ENCODE measurements at regions of chr7 and their contacts with region 1.

Region 1: DNA sequence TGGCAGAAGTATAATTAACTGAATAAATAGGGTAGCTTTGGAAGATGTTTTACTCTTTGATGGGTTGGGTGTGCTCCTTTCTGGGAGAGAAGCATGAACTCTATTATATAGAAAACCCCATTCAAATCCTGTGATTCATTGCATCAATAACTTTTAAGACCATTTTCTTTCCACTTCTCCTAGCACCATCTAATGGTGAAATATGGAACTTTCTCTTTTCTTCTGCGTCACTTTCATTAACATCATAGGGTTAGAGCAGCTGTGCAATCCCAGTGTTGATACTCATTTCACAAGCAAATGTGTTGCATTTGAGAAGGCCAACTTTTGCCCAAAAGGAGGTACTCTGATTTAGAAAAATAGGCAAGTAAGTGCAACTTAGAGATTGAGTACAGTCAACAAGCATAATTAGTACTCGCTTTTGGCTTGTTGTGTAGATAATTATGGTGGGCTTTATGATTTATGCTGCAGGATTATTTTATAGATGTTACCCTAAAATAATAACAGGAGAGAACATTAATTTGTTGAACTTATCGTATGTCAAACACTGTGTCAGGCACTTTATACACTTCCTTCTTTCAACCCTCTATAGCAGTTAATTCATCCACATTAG is 92.9 kb downstream of the CPED1 start:
- DNase-seq: no peak
- H3K4me3 ChIP-seq: no peak overlapping the region
- H3K27ac ChIP-seq: no peak overlapping the region
- H3K4me1 ChIP-seq: no peaks in the 10 kb centered on the region
- H3K27me3 ChIP-seq: no peaks in the 10 kb centered on the region
- CTCF ChIP-seq: peak; percentile 63 to 77 (median 69)
- POLR2A ChIP-seq: no peak

Region 2: DNA sequence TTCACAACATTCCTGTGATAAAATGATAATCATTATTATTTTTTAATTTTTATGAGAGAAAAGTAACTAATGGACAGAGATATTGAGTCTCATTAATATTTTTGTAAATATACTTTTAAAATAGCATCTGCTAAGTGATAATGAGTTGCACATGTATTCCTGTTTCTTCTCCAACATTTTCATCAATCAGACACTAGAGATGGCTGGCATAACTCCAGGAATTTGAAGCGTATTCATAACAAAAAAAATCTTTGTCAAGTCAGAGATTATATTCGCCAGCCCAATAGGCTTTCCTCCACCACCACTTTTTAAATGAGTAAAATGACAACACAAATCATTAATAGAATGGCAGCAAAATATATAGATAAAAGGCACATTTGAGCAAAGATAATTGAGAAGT is 1332.4 kb before region 1 on chr7:
- intact Hi-C with region 1: no loop called
- DNase-seq: no peak
- H3K4me3 ChIP-seq: no peak overlapping the region
- H3K27ac ChIP-seq: no peak overlapping the region
- H3K4me1 ChIP-seq: no peaks in the 10 kb centered on the region
- H3K27me3 ChIP-seq: no peaks in the 10 kb centered on the region
- CTCF ChIP-seq: no peak
- POLR2A ChIP-seq: no peak

Region 3: GRCh38 chr7:120987683-120988590 is 93.5 kb before region 1 on chr7:
- intact Hi-C with region 1: loop called (anchors 10 kb)
- DNase-seq: peak; percentile 78 to 80
- H3K4me3 ChIP-seq: peak overlapping the region; percentile 51 to 65 (median 53)
- H3K27ac ChIP-seq: peak overlapping the region; percentile 77 to 90
- H3K4me1 ChIP-seq: no peaks in the 10 kb centered on the region
- H3K27me3 ChIP-seq: peaks cover 0 to 7% of the 10 kb centered on the region in 2 donors
- CTCF ChIP-seq: peak; percentile 64 to 89 (median 74)
- POLR2A ChIP-seq: no peak

Region 4: DNA sequence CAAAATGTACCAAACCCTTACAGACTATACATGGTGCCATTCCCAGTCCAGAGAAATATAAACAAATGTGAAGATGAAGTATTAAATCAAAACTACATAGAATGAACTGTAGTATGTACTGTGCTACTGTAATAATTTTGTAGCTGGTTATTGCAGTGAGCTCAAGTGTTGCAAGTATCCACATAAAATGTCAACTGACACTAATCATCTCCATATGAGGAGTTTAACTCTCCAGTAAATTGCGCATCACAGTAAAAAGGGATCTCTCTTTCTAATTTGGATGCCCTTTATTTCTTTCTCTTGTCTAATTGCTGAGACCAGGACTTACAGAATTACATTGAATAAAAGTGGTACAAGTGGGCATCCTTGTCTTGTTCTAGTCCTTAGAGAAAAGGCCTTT is 72.6 kb after region 1 on chr7:
- intact Hi-C with region 1: no loop called
- DNase-seq: no peak
- H3K4me3 ChIP-seq: no peak overlapping the region
- H3K27ac ChIP-seq: no peak overlapping the region
- H3K4me1 ChIP-seq: no peaks in the 10 kb centered on the region
- H3K27me3 ChIP-seq: no peaks in the 10 kb centered on the region
- CTCF ChIP-seq: no peak
- POLR2A ChIP-seq: no peak

Measured in breast epithelium (tissue), 4 donors.